ENCODE measurements at regions of chr4 and their contacts with region 1.

Region 1: DNA sequence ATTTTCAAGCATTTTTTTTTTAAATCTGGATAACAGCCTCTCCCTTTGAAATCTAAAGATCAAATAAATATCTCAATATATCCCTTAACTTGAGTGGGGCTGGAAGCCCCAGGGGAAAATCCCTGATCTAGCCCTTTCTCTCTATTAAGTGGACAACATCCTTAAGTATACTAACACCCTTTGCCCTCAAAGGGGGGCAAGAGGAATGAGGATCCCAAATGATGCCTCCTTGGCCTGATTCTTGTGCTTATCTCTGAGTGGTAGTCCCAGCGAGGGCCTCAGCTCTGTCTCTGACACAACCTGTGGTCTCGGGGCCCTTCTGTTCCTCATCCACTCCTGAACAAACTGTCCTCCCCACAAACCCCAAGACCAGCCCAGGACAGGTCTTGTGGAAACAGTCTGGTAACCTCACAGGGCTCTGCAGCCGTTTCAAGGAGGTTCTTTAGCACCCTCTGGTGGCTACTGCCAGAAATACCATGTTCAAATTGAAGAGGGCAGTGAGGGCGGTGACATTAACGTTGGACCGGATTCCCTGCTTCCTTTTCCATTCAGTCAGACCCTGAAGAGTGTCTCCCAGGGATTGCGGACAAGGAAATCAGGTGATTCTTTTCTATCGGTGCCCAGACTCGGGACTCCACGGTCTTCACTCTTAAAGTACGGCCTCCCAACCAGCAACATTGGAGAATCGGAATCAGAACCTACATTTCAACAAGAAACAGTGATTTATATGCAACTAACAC is 12.9 kb downstream of the CXCL13 start:
- H3K4me3 ChIP-seq: no peak overlapping the region
- H3K27ac ChIP-seq: no peak overlapping the region
- H3K4me1 ChIP-seq: no peaks in the 10 kb centered on the region
- CTCF ChIP-seq: peak; percentile 54; the same call in 1 of the 2 replicates

Region 2: DNA sequence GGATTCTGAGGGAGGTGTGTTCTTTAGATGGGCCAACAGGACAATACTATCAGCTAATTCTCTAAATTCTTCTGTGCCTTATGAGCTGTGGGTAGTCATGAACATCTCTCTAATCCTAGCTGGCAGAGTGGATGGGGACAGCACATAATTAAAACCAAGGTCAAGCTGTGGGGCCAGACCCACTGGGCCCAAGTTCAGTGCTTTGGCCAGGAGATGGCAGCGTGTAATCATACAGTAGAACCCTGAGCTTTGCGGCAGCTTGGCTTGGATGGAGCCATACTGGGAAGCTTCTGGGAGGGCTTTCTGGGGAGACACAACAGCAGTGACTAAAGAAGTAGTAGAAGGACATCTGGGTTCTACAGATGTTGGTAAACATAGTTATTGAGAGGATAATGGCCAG is 153.3 kb before region 1 on chr4:
- CTCF ChIA-PET with region 1: interaction called, 17 read pairs
- POLR2A ChIA-PET with region 1: no interaction called
- H3K4me3 ChIP-seq: no peak overlapping the region
- H3K27ac ChIP-seq: no peak overlapping the region
- H3K4me1 ChIP-seq: no peaks in the 10 kb centered on the region
- CTCF ChIP-seq: 0 out of 2 replicates have a peak, but pooled peaks have one; percentile 15

Measured in HEK293 (cell line).